Endothelial cell of umbilical vein (primary cell): ENCODE measurements at regions of chr10 and their contacts with region 1.

Region 1: GRCh38 chr10:14185316-14186045 is 145.2 kb downstream of the FRMD4A start:
- DNase-seq: peak; percentile 33
- H3K4me3 ChIP-seq: no peak overlapping the region
- H3K27ac ChIP-seq: no peak overlapping the region
- H3K4me1 ChIP-seq: no peaks in the 10 kb centered on the region
- H3K27me3 ChIP-seq: peaks cover 24 to 39% of the 10 kb centered on the region in 2 experiments
- CTCF ChIP-seq: no peak
- POLR2A ChIP-seq: peak; percentile 99

Region 2: DNA sequence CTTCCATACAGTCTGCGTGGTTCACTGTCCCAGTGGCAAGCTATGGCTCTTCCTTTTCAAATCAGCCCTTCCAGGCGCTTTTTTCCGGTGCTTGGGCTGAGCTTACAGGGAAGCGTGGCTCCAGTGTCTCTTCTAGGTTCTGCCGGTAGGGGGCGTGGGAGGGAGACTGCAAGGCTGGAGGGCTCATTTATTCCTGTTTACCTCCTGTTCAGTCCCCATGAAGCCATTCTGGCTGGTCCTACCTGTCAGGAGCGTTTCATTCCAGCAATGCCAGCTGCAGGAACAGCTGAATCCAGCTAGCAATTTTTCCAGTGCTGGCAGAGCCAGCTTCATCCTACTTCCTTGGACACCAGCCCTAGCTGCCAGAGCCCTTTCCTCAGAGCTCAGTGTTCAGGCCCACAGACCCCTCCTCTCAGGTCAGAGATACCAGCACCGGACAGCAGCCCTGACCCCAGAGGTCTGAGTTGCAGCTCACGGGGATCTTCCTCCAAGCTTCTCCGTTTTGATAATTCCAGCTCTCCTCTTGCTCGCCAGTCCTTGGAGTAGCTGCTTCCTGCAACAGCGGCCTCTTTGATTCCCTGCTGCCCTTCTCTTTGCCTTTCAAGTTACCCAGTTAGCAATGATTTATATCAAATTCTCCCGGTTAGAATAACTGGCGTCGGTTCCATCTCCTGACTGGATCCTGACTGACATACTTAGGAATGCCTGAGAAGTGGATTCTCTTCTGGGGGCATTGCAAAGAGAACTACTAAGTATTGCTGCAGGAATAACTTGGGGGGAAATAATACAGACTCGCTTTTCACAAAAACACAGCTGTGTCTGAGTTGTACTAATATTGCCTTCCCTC is 15.4 kb after region 1 on chr10:
- CTCF ChIA-PET with region 1: interaction called, 41 read pairs
- POLR2A ChIA-PET with region 1: no interaction called
- dilution Hi-C with region 1: no loop called
- intact Hi-C with region 1: no loop called
- DNase-seq: no peak
- H3K4me3 ChIP-seq: no peak overlapping the region
- H3K27ac ChIP-seq: no peak overlapping the region
- H3K4me1 ChIP-seq: no peaks in the 10 kb centered on the region
- H3K27me3 ChIP-seq: peaks cover 11 to 14% of the 10 kb centered on the region in 2 experiments
- CTCF ChIP-seq: peak; percentile 11 to 28
- POLR2A ChIP-seq: no peak